PC-9 (cell line): ENCODE measurements at regions of chr1 and their contacts with region 1.

Region 1: GRCh38 chr1:210328746-210329503 is at the start of gene HHAT:
- DNase-seq: peak; percentile 50 to 86
- H3K4me3 ChIP-seq: peak within 1 kb of the TSS; percentile 95
- H3K27ac ChIP-seq: peak within 1 kb of the TSS; percentile 53
- H3K4me1 ChIP-seq: peaks cover 18% of the 10 kb centered on the region; the same call in 1 of the 2 replicates
- H3K27me3 ChIP-seq: no peaks in the 10 kb centered on the region
- CTCF ChIP-seq: no peak
- total RNA-seq, gene HHAT: 5.3 and 10.9 TPM in 2 replicates

Region 2: GRCh38 chr1:210280221-210280620 is 48.7 kb before region 1 on chr1:
- CTCF ChIA-PET with region 1: no interaction called
- POLR2A ChIA-PET with region 1: no interaction called
- intact Hi-C with region 1: no loop called
- DNase-seq: no peak
- H3K4me3 ChIP-seq: no peak overlapping the region
- H3K27ac ChIP-seq: no peak overlapping the region
- H3K4me1 ChIP-seq: no peaks in the 10 kb centered on the region
- H3K27me3 ChIP-seq: peaks cover 8% of the 10 kb centered on the region; the same call in 1 of the 2 replicates
- CTCF ChIP-seq: no peak

Region 3: GRCh38 chr1:210366767-210367166 is 37.8 kb after region 1 on chr1:
- CTCF ChIA-PET with region 1: no interaction called
- POLR2A ChIA-PET with region 1: no interaction called
- intact Hi-C with region 1: loop called (anchors 2 kb)
- DNase-seq: peak; percentile 72 to 79
- H3K4me3 ChIP-seq: no peak overlapping the region
- H3K27ac ChIP-seq: peak overlapping the region; percentile 17
- H3K4me1 ChIP-seq: peaks cover 17% of the 10 kb centered on the region
- H3K27me3 ChIP-seq: no peaks in the 10 kb centered on the region
- CTCF ChIP-seq: no peak

Region 4: GRCh38 chr1:211557894-211558625 is 1229.1 kb after region 1 on chr1:
- CTCF ChIA-PET with region 1: no interaction called
- POLR2A ChIA-PET with region 1: no interaction called
- intact Hi-C with region 1: no loop called
- DNase-seq: no peak
- H3K4me3 ChIP-seq: no peak overlapping the region
- H3K27ac ChIP-seq: no peak overlapping the region
- H3K4me1 ChIP-seq: peaks cover 32% of the 10 kb centered on the region
- H3K27me3 ChIP-seq: no peaks in the 10 kb centered on the region
- CTCF ChIP-seq: no peak